ENCODE measurements at regions of chr16 and their contacts with region 1.

Region 1: DNA sequence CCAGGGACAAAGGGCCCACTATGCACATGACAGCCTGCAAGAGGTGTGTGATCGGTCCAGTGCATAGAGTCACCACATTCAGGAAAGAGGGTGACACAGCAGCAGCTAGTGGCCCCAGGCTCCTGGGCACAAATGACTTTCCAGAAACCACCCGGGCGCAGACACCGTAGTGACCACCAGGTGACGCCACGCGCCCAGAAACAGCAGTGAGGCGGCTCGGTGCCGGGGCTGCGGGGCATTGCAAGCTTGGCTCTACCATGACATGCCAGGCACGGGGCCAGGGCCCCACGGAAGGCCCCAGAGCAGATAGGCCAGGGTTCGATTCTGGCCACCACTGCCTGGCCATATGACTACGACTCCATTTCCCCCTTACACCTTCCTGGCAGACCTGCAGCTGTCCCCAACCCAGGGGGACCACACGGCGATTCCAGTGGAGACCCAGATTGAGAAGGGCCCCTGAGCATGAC is 6.7 kb downstream of the RHBDF1 start:
- DNase-seq: peak; percentile 57
- H3K4me3 ChIP-seq: no peak overlapping the region
- H3K27ac ChIP-seq: no peak overlapping the region
- H3K4me1 ChIP-seq: peaks cover 18% of the 10 kb centered on the region
- H3K27me3 ChIP-seq: no peaks in the 10 kb centered on the region
- CTCF ChIP-seq: peak; percentile 90 to 96

Region 2: GRCh38 chr16:96935-97381 is 31.3 kb after region 1 on chr16:
- CTCF ChIA-PET with region 1: interaction called, 12 read pairs
- dilution Hi-C with region 1: no loop called
- in situ Hi-C with region 1: no loop called
- intact Hi-C with region 1: loop called (anchors 1 kb)
- DNase-seq: peak; percentile 73
- H3K4me3 ChIP-seq: no peak overlapping the region
- H3K27ac ChIP-seq: no peak overlapping the region
- H3K4me1 ChIP-seq: peaks cover 10% of the 10 kb centered on the region
- H3K27me3 ChIP-seq: no peaks in the 10 kb centered on the region
- CTCF ChIP-seq: peak; percentile 92 to 98

Region 3: DNA sequence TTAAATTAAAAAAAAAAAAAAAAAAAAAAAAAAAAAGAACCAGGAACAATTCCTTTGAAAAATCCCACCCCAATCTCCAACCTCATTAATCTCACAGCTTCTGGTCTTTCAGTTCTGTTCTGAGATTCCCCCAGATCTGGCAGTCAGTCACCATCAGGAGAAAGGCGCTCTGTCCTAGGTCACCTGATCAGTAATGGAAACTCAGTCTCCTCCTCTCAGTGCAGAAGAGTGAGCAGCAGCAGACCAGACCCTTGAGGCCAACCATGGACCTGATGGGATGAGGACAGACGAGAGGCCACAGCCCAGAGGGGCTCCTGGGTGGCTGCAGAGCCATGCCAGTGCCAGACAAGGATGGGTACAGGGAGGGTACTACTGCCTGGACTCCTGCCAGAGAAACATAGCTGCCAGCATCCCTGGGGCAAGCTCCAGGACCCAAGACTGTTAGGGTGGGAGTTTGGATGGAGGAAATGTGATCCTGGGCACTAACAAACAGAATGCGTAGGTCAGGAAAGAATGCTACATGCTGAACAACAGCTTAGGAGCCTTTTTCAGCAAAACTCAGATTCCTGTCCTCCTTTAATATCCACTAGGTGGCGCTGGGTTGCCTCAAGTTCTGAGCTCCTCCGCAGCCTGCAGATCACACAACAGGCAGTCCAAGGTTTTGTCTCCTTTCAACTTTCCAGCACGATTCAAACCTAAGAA is 41.1 kb after region 1 on chr16:
- CTCF ChIA-PET with region 1: interaction called, 15 read pairs
- dilution Hi-C with region 1: no loop called
- in situ Hi-C with region 1: no loop called
- intact Hi-C with region 1: no loop called
- DNase-seq: peak; percentile 53
- H3K4me3 ChIP-seq: no peak overlapping the region
- H3K27ac ChIP-seq: no peak overlapping the region
- H3K4me1 ChIP-seq: peaks cover 12% of the 10 kb centered on the region
- H3K27me3 ChIP-seq: no peaks in the 10 kb centered on the region
- CTCF ChIP-seq: peak; percentile 74 to 81

Region 4: GRCh38 chr16:180938-181667 is 115.4 kb after region 1 on chr16:
- CTCF ChIA-PET with region 1: no interaction called
- dilution Hi-C with region 1: no loop called
- in situ Hi-C with region 1: no loop called
- intact Hi-C with region 1: loop called (anchors 1 kb)
- DNase-seq: peak; percentile 57
- H3K4me3 ChIP-seq: peak overlapping the region in 2 of 3 experiments; percentile 20 to 33
- H3K27ac ChIP-seq: no peak overlapping the region
- H3K4me1 ChIP-seq: peaks cover 9% of the 10 kb centered on the region
- H3K27me3 ChIP-seq: peaks cover 7% of the 10 kb centered on the region
- CTCF ChIP-seq: peak; percentile 82 to 95